ENCODE measurements at regions of chr1 and their contacts with region 1.

Region 1: DNA sequence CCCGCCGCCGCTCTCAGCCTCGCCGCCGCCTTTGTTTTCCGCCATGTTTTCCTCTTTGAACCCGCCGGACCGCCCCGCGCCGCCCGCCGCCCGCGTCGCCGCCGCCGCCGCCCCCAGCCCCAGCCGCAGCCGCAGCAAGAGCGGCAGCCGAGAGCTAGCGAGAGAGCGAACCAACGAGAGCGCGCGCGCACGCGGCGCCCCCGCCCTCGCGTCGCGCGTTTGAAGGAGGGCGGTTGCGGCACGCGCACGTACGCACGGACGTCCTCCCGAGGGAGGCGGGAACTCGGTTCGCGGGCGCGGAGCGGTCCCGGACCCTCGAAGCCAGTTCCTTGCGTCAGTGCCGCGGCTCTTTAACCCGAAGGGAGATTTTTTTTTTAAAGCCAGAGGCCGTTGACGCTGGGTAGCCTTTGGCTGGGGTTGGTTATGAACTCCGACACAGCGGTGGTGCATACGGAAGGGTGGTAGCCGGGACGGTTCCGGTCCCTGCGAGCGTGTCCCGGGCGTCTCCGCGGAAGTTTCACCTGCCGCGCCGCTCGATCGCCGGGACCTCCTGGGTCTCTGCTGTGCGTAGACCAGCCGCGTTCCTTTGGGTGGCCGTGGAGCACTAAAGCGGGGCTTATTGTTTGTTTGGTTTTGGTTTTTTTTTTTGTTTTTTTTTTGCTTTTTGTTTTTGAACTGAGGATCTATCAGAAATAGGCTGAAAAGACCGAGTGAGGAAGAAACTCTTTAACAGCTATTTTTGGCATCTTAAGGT is at the start of gene TRIM33:
- DNase-seq: peak; percentile 92
- H3K4me3 Mint-ChIP-seq: peak within 1 kb of the TSS; percentile 93
- H3K27ac Mint-ChIP-seq: peak within 1 kb of the TSS; percentile 98
- H3K4me1 Mint-ChIP-seq: peaks cover 45% of the 10 kb centered on the region
- H3K27me3 Mint-ChIP-seq: peaks cover 1% of the 10 kb centered on the region
- total RNA-seq, gene TRIM33: 39.2 and 41.7 TPM in 2 replicates

Region 2: GRCh38 chr1:113978863-113979702 is 532.1 kb before region 1 on chr1 and contains the start of gene OLFML3:
- intact Hi-C with region 1: loop called (anchors 10 kb)
- DNase-seq: no peak
- H3K4me3 Mint-ChIP-seq: no peak within 1 kb of the TSS
- H3K27ac Mint-ChIP-seq: peak within 1 kb of the TSS; percentile 11
- H3K4me1 Mint-ChIP-seq: peaks cover 43% of the 10 kb centered on the region
- H3K27me3 Mint-ChIP-seq: no peaks in the 10 kb centered on the region
- total RNA-seq, gene OLFML3: 0.10 TPM in 2 replicates

Region 3: DNA sequence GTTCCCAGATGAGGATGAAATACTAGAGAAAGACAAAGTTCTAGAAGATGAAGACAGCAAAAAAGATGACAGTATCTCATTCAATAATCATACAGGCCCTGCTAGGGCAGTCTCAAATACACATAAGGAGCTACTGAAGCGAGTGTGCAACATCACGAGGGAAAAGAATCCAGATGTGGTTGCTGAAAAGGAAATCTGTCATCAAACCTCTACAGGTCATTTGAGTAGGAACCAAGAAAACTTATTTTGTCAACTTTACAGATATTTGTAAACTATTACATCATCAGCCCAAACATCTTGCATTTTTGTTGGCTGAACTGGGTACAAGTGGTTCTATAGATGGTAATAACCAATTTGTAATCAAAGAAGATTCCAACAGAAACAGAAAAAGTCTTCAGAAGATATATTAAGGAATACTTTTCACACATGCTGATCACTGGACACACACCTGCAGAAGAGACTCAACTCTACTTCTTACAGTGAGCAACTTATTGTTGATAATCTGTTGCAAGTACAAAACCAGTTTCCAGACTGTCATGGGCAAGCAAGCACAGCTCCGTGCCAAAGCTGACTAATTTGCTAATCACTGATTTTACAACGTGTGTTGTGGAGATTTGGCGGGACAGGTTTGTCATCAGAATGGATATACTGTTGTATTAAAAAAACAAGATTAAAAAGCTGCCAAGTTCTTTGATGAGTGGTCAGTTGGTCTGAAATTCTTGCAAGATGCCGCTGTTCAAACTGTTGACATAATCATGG is 42.3 kb before region 1 on chr1:
- intact Hi-C with region 1: loop called (anchors 2 kb)
- DNase-seq: no peak
- H3K4me3 Mint-ChIP-seq: no peak overlapping the region
- H3K27ac Mint-ChIP-seq: peak overlapping the region; percentile 59
- H3K4me1 Mint-ChIP-seq: peaks cover 45% of the 10 kb centered on the region
- H3K27me3 Mint-ChIP-seq: no peaks in the 10 kb centered on the region

Region 4: GRCh38 chr1:114670083-114671010 is 159.1 kb after region 1 on chr1:
- intact Hi-C with region 1: loop called (anchors 2 kb)
- DNase-seq: peak; percentile 76
- H3K4me3 Mint-ChIP-seq: peak overlapping the region; percentile 89
- H3K27ac Mint-ChIP-seq: peak overlapping the region; percentile 20
- H3K4me1 Mint-ChIP-seq: peaks cover 8% of the 10 kb centered on the region
- H3K27me3 Mint-ChIP-seq: peaks cover 48% of the 10 kb centered on the region

Region 5: GRCh38 chr1:114780344-114781226 is 269.4 kb after region 1 on chr1 and contains the start of gene SIKE1:
- intact Hi-C with region 1: loop called (anchors 1 kb)
- DNase-seq: peak; percentile 92
- H3K4me3 Mint-ChIP-seq: peak within 1 kb of the TSS; percentile 100
- H3K27ac Mint-ChIP-seq: peak within 1 kb of the TSS; percentile 96
- H3K4me1 Mint-ChIP-seq: peaks cover 34% of the 10 kb centered on the region
- H3K27me3 Mint-ChIP-seq: peaks cover 4% of the 10 kb centered on the region
- total RNA-seq, gene SIKE1: 59.4 and 65.0 TPM in 2 replicates

Region 6: GRCh38 chr1:116372587-116373444 is 1861.6 kb after region 1 on chr1 and contains the start of gene ATP1A1:
- intact Hi-C with region 1: loop called (anchors 5 kb)
- DNase-seq: peak; percentile 95
- H3K4me3 Mint-ChIP-seq: peak within 1 kb of the TSS; percentile 95
- H3K27ac Mint-ChIP-seq: peak within 1 kb of the TSS; percentile 90
- H3K4me1 Mint-ChIP-seq: peaks cover 38% of the 10 kb centered on the region
- H3K27me3 Mint-ChIP-seq: peaks cover 12% of the 10 kb centered on the region
- total RNA-seq, gene ATP1A1: 238 and 240 TPM in 2 replicates